ENCODE measurements at regions of chr13 and their contacts with region 1.

Region 1: GRCh38 chr13:98653463-98653985 is 76.6 kb upstream of the STK24 start:
- DNase-seq: peak; percentile 88 to 89
- H3K4me3 ChIP-seq: no peak overlapping the region
- H3K27ac ChIP-seq: no peak overlapping the region
- H3K4me1 ChIP-seq: peaks cover 7 to 25% of the 10 kb centered on the region in 2 donors
- H3K27me3 ChIP-seq: no peaks in the 10 kb centered on the region
- CTCF ChIP-seq: peak; percentile 82 to 93 (median 90)
- POLR2A ChIP-seq: peak in 1 of 2 donors; percentile 9

Region 2: DNA sequence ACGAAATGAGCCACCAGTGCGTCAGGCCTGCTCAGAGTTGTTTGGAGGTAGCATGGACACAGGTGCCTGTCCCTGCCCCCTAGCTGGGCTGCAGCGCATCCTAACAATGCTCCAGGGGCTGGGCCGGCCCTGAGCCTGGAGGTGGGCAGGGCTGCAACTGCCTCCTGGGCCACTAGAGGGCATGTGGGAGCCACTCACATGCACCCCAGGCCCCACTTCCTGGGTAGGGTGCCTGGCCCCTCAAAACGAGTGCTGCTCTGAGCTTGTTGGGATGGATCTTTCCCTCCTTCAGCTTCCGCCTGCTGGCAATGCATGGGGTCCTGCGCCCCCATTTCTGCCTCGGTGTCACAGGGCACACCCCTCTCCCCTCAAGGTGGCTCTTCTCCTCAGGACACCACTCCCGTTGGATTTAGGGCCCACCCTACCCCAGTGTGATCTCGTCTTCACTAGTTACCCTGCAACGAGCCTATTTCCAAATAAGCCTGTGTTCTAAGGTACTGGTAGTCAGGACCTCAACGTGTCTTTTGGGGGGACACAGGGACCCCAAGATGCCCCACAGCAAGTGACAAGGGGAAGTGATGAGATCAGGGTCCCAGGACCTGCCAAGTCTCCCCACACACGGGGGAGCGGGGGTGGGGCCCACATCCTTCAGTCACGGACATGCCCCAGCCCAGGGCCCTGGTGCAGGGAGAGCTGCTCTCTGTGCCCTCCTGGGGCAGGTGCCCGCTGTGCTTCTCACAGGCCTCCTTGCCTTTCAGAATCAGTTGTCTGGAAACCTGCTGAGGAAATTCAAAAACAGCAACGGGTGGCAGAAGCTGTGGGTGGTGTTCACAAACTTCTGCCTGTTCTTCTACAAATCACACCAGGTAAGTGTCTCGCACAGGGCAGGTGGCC is 207.9 kb before region 1 on chr13:
- intact Hi-C with region 1: loop called (anchors 5 kb)
- DNase-seq: peak; percentile 68 to 70
- H3K4me3 ChIP-seq: no peak overlapping the region
- H3K27ac ChIP-seq: peak overlapping the region in 2 of 3 donors; percentile 40 to 55
- H3K4me1 ChIP-seq: peaks cover 0 to 19% of the 10 kb centered on the region in 2 donors
- H3K27me3 ChIP-seq: no peaks in the 10 kb centered on the region
- CTCF ChIP-seq: peak; percentile 83 to 98 (median 94)
- POLR2A ChIP-seq: no peak

Region 3: GRCh38 chr13:98476538-98476966 is 177.0 kb before region 1 on chr13:
- intact Hi-C with region 1: loop called (anchors 10 kb)
- DNase-seq: peak; percentile 32 to 41
- H3K4me3 ChIP-seq: no peak overlapping the region
- H3K27ac ChIP-seq: peak overlapping the region; percentile 5 to 59 (median 57)
- H3K4me1 ChIP-seq: peaks cover 18 to 30% of the 10 kb centered on the region in 2 donors
- H3K27me3 ChIP-seq: no peaks in the 10 kb centered on the region
- CTCF ChIP-seq: no peak
- POLR2A ChIP-seq: no peak

Region 4: GRCh38 chr13:98576963-98577822 is 76.3 kb before region 1 on chr13 and contains the start of gene STK24:
- intact Hi-C with region 1: loop called (anchors 10 kb)
- DNase-seq: peak; percentile 68 to 69
- H3K4me3 ChIP-seq: peak within 1 kb of the TSS; percentile 83 to 93 (median 90)
- H3K27ac ChIP-seq: peak within 1 kb of the TSS; percentile 98 to 100 (median 100)
- H3K4me1 ChIP-seq: peaks cover 22 to 43% of the 10 kb centered on the region in 2 donors
- H3K27me3 ChIP-seq: no peaks in the 10 kb centered on the region
- CTCF ChIP-seq: no peak
- POLR2A ChIP-seq: peak in 1 of 2 donors; percentile 83
- total RNA-seq, gene STK24: 74.5 to 102 (median 90.7) TPM

Measured in thyroid gland (tissue), 4 donors.